Heart right ventricle (tissue), 16 donors: ENCODE measurements at regions of chr17 and their contacts with region 1.

Region 1: DNA sequence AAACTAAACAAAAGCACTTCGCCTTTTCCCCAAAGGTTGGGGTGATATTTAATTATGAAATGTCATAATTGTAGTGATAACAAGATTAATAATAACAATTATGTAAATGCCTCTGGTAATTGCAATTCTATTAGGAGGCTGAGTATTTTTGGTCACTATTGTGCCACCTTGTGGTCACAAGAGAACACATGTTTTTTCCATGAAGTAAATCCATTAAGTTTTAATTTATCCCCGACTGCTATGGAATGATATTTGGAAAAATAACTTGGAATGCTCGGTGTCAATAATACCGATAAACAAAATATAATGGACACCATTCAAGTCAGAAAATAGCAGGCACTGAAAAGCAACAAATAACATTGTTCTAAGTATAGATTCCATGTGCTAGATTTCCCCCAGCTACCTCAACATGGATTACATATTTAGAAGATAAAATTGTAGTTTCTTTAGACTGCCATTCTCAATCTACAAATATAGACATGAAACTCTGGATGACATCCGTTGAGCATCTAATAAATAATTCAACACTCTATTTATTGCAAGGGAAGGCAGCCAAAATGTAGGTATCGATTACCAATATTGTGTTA is 25.0 kb upstream of the KCNJ2 start:
- DNase-seq: no peak
- ATAC-seq: peak in 1 of 8 donors; percentile 44
- H3K4me3 ChIP-seq: no peak overlapping the region
- H3K27ac ChIP-seq: no peak overlapping the region
- H3K4me1 ChIP-seq: peaks cover 0 to 7% (median 0%) of the 10 kb centered on the region in 9 donors
- H3K27me3 ChIP-seq: no peaks in the 10 kb centered on the region
- CTCF ChIP-seq: peak; percentile 45 to 86 (median 76)

Region 2: GRCh38 chr17:69567130-69567529 is 577.2 kb before region 1 on chr17:
- intact Hi-C with region 1: loop called in 9 of 10 experiments (anchors 1 to 10 kb)
- DNase-seq: no peak
- ATAC-seq: no peak
- H3K4me3 ChIP-seq: no peak overlapping the region
- H3K27ac ChIP-seq: no peak overlapping the region
- H3K4me1 ChIP-seq: peaks cover 0 to 9% (median 0%) of the 10 kb centered on the region in 9 donors
- H3K27me3 ChIP-seq: no peaks in the 10 kb centered on the region
- CTCF ChIP-seq: no peak

Region 3: DNA sequence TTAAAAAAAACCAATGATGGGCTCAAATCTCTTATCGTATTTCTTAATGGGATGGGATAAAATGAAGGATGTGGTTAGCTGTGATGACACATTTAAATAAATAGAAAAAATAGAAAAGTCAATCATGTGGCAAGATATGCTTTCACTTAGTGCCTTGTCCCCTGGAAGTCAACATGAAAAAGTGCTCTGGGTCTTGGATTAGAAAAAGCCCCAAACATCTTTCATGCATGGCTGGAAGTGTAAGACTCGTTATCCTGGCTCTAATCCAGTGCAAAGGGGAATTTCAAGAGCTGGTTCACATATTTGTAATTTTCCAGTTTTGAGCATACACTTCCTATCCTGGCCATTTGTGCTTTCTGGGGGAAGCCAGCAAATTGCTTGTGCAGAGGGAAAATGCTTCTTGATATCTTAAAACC is 569.0 kb before region 1 on chr17:
- intact Hi-C with region 1: loop called in 3 of 10 experiments (anchors 5 kb)
- DNase-seq: peak in 1 of 2 donors; percentile 15
- ATAC-seq: peak in 7 of 8 donors; percentile 29 to 81 (median 66)
- H3K4me3 ChIP-seq: no peak overlapping the region
- H3K27ac ChIP-seq: peak overlapping the region in 9 of 10 donors; percentile 1 to 54 (median 29)
- H3K4me1 ChIP-seq: peaks cover 0 to 29% (median 19%) of the 10 kb centered on the region in 9 donors
- H3K27me3 ChIP-seq: no peaks in the 10 kb centered on the region
- CTCF ChIP-seq: no peak

Region 4: DNA sequence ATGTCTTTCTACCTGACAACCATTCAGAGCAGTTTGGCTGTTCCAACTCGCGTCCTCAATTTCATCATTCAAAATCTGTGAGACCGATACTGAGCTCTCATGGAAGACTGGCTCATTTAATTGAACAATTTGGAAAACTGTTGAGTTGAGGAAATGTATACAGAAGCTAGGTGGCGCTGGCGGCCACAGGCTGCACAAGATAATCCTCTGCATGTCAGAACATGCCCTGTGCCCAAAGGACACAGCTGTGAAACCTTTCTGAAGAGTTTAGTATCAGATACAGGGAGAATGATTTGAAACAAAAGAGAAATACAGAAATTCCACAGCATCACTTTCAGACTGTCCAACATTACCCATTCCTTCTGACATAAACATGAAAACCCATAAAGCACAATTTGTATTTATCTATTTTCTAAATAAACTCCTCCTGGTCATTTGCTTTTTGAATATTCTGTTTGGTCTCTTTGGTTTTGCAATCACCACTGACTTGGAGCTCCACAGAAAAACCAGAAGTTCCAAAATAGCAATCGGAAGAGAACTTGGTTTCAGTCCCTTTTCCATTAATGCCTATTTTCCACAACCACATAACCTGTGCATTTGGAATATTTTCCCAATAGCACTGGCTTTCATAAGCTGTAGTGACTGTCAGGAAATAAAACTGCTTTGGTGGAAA is 537.1 kb before region 1 on chr17:
- intact Hi-C with region 1: loop called (anchors 1 to 10 kb)
- DNase-seq: peak; percentile 65 to 78
- ATAC-seq: peak; percentile 78 to 92 (median 87)
- H3K4me3 ChIP-seq: no peak overlapping the region
- H3K27ac ChIP-seq: peak overlapping the region; percentile 5 to 82 (median 50)
- H3K4me1 ChIP-seq: peaks cover 15 to 40% (median 35%) of the 10 kb centered on the region in 9 donors
- H3K27me3 ChIP-seq: no peaks in the 10 kb centered on the region
- CTCF ChIP-seq: peak; percentile 74 to 92 (median 88)

Region 5: DNA sequence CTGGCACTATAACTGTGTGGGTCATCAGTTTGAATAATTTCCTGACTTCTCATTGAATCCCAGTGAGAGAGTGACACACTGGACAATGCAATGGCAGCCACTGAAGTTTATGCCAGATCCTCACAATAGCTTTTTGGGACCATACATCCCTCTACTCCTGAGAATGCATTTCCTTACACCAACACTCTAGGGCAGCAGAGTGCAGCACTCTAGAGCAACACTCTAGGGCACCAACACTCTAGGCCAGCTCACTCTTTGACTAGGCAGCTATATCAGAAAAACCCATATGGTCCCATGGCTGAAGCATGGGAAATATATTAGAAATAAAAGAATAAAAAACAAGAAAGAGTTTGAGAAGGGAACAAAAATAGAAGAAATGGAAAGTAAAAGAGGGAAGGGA is 420.6 kb before region 1 on chr17:
- intact Hi-C with region 1: loop called in 1 of 10 experiments (anchors 10 kb)
- DNase-seq: no peak
- ATAC-seq: no peak
- H3K4me3 ChIP-seq: no peak overlapping the region
- H3K27ac ChIP-seq: no peak overlapping the region
- H3K4me1 ChIP-seq: peaks cover 0 to 14% (median 7%) of the 10 kb centered on the region in 9 donors
- H3K27me3 ChIP-seq: no peaks in the 10 kb centered on the region
- CTCF ChIP-seq: peak in 3 of 9 donors; percentile 16 to 20 (median 17)

Region 6: GRCh38 chr17:69909389-69909788 is 235.0 kb before region 1 on chr17:
- intact Hi-C with region 1: loop called in 1 of 10 experiments (anchors 10 kb)
- DNase-seq: no peak
- ATAC-seq: no peak
- H3K4me3 ChIP-seq: no peak overlapping the region
- H3K27ac ChIP-seq: no peak overlapping the region
- H3K4me1 ChIP-seq: peaks cover 0 to 20% (median 6%) of the 10 kb centered on the region in 9 donors
- H3K27me3 ChIP-seq: no peaks in the 10 kb centered on the region
- CTCF ChIP-seq: no peak

Region 7: DNA sequence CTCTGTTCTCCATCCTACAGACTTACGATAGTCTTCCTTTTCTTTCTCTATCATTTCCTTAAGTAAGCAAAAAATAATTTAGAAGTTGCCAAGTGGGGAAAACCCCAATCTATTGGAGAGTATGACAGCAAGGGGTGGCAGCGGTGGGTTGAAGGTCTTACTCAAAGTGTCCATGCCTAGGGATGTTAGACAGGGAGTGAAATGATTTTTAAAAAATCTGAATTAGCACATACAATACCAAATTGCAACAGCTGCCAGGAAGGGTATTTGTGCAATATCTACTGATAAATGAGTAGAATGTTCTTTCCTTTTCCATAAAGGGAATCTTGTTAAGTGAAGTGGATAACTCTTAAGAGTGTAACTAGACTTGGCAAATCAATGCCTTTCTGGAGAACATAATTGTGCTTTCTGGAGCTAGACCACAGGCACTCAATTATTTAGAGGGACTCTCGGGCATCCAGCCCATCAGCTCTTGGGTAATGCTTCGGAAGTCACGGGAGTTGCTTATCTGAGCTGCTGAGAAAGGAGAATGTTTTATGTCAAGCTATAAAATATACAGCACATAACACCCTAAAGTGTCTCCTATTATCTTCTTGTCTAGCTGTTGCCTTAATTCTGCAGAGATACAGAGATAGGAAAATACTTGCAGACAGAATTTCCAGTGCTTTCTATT is 176.5 kb after region 1 on chr17:
- intact Hi-C with region 1: no loop called
- DNase-seq: no peak
- ATAC-seq: peak in 3 of 8 donors; percentile 17 to 85 (median 27)
- H3K4me3 ChIP-seq: no peak overlapping the region
- H3K27ac ChIP-seq: no peak overlapping the region
- H3K4me1 ChIP-seq: peaks cover 0 to 25% (median 5%) of the 10 kb centered on the region in 9 donors
- H3K27me3 ChIP-seq: no peaks in the 10 kb centered on the region
- CTCF ChIP-seq: no peak